Natural killer cell (primary cell): ENCODE measurements at regions of chr19 and their contacts with region 1.

Region 1: DNA sequence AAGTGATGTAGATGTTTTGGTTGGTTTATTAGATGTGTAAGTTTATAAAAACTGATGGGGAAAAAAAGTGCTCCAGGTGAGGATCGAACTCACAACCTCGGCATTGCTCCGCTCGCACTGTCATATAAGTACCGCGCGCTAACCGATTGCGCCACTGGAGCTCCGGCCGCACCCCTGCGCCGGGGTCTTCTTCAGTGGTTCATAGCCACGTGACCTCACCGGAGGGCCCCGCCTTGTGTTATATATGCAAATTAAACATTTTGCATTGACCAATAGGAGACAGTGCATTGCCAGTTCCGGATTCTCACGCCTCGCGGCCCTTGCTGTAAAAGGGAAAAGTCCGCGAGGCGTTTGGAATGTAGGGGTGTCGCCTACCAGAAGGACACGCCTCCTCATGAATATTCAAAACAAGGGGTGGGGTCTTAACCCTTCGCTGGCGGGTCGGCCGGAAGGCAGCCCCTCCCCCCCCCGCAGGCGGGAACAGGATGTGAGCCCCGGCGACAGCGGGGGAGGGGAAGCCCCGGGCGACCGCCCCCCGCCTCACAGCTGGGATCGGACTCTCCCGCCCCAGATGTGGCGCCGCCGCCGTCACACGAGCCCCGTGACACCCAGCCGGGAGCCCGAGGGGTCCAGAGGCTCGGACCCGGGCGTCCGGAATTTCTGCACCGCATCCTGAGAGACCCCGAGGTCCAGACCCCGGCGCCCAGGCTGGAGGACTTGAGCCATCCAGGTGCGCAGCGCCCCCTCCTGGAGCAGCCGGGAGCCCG is at the start of gene PLEKHG2:
- DNase-seq: peak; percentile 98
- ATAC-seq: peak; percentile 54 to 80 (median 57)
- H3K4me3 ChIP-seq: peak within 1 kb of the TSS; percentile 70
- H3K4me3 Mint-ChIP-seq: peak within 1 kb of the TSS; percentile 97
- H3K27ac ChIP-seq: peak within 1 kb of the TSS; percentile 96
- H3K27ac Mint-ChIP-seq: peak within 1 kb of the TSS; percentile 96 to 97
- H3K4me1 ChIP-seq: peaks cover 47% of the 10 kb centered on the region
- H3K4me1 Mint-ChIP-seq: peaks cover 55 to 66% of the 10 kb centered on the region in 2 donors
- H3K27me3 ChIP-seq: no peaks in the 10 kb centered on the region
- H3K27me3 Mint-ChIP-seq: no peaks in the 10 kb centered on the region
- CTCF ChIP-seq: peak; percentile 86
- total RNA-seq, gene PLEKHG2: 70.2 to 129 (median 80.7) TPM

Region 2: DNA sequence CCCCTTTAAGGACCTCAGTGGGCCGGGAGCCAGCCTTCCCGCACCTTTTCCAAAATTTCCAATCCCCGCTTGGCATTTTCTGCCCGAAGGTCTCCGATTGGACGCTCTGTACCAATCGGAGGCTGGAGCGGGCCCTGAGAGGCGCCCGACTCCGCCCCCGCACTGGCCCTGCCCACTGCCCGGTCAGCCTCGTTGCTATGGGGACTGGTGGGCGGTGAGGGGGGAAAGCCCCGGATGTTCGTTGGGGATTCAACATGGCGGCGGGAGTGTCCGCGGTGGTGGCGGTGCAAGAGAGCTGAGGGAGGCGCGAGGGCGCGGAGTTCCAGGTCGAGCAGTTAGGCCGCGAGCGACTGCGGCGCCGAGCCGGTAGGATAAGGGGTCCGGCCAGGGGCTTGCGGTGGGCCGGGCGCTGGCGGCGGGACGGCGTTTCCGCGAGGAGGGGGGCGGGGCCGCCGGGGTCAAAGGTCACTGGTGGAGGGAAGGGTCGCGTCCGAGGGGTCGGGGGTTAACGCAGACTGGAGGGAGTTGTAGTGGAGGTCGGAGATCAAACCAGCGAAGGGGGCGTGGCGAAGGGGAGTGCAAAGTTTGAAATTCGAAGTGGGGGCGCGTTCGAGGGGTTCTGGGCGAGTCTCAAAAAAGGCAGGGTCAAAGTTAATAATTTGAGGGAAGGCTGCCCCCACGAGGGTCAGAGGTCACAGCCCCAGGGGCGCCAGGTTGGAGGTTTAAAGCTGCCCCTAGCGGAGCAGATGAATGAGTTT is 286.6 kb before region 1 on chr19 and contains the start of gene PAK4:
- intact Hi-C with region 1: loop called (anchors 2 kb)
- DNase-seq: peak; percentile 97
- ATAC-seq: peak; percentile 96 to 98 (median 97)
- H3K4me3 ChIP-seq: peak within 1 kb of the TSS; percentile 37
- H3K4me3 Mint-ChIP-seq: peak within 1 kb of the TSS; percentile 98
- H3K27ac ChIP-seq: peak within 1 kb of the TSS; percentile 73
- H3K27ac Mint-ChIP-seq: peak within 1 kb of the TSS; percentile 95 to 100
- H3K4me1 ChIP-seq: peaks cover 25% of the 10 kb centered on the region
- H3K4me1 Mint-ChIP-seq: peaks cover 20 to 33% of the 10 kb centered on the region in 2 donors
- H3K27me3 ChIP-seq: no peaks in the 10 kb centered on the region
- H3K27me3 Mint-ChIP-seq: peaks cover 0 to 4% of the 10 kb centered on the region in 2 donors
- CTCF ChIP-seq: no peak
- total RNA-seq, gene PAK4: 6.7 to 13.4 (median 11.8) TPM

Region 3: DNA sequence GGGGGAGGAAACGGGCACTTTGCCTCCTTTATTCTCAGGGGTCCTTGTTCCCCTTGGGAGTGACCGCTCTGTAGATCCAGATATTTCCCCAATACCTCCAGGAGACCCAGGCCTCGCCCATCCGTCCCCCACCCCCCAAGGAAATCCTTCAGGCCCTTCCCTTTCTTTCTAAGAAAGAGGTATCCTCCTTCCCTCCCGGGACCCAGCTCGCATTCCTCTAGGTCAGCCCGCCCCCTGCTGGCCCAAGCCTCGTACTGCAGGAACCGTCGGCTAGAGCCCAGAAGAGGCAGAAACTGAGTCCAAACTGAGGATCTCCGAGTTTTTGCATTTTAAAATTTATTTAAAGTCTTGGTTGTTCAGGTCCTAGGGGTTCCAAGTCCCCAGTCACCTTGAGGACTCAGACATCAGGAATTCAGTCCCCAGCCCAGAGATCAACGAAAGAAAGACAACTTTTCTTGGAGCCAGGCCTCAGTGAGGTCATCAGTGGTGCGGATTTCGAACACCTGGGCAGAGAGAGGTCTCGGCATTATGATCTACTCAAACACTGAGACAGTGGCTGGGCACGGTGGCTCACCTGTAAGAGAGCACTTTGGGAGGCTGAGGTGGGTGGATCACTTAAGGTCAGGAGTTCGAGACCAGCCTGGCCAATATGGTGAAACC is 84.1 kb before region 1 on chr19:
- intact Hi-C with region 1: no loop called
- DNase-seq: peak; percentile 83 to 88
- ATAC-seq: peak; percentile 88 to 95 (median 89)
- H3K4me3 ChIP-seq: no peak overlapping the region
- H3K4me3 Mint-ChIP-seq: peak overlapping the region; percentile 28
- H3K27ac ChIP-seq: no peak overlapping the region
- H3K27ac Mint-ChIP-seq: peak overlapping the region; percentile 64 to 81
- H3K4me1 ChIP-seq: peaks cover 44% of the 10 kb centered on the region
- H3K4me1 Mint-ChIP-seq: peaks cover 23 to 29% of the 10 kb centered on the region in 2 donors
- H3K27me3 ChIP-seq: no peaks in the 10 kb centered on the region
- H3K27me3 Mint-ChIP-seq: no peaks in the 10 kb centered on the region
- CTCF ChIP-seq: peak; percentile 96

Region 4: DNA sequence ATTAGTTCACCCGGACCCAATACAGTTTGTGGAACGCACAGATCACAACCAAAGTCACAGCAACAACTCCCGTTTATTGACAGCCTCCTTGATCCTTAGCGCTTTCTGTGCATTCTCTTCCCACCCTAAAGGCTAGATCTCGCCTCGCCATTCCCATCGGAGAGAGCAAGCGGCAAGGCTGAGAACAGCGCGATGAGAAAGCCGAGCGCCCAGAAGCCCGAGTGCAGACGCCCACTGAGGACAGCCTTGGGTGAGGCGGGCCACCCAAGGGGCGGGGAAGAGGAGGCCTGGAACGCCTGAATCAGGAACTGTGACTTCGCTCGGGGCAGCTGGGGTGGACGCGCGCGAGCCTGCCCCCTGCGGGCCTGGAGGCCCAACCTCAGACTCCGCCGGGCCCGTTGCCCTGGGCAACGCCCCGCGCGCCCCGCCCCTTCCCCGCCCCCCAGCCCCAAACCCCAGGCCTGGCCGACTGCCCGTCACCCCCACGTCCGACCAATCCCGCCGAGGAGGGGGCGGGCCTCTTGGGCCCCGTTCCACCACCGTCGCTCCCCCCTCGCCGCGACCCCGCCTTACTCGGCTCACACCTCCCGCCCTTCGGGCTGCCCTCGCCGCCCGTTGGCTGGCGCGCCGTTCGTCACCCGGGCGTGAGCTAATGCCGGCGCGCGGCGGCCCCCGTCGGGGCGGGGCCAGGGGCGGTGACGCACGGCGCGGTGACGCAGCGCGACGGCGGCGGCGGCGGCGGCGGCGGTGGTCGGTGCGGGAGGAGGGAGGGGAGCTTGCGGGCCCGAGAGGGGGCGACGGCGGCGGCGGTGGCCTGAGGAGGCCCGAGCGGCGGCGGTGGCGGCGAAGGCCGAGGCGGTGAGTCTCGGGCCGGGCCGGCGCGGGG is 70.3 kb before region 1 on chr19 and contains the start of gene SAMD4B:
- intact Hi-C with region 1: loop called (anchors 2 kb)
- DNase-seq: peak; percentile 99
- ATAC-seq: peak; percentile 88 to 96 (median 88)
- H3K4me3 ChIP-seq: peak within 1 kb of the TSS; percentile 97
- H3K4me3 Mint-ChIP-seq: peak within 1 kb of the TSS; percentile 99
- H3K27ac ChIP-seq: peak within 1 kb of the TSS; percentile 86
- H3K27ac Mint-ChIP-seq: peak within 1 kb of the TSS; percentile 97
- H3K4me1 ChIP-seq: peaks cover 23% of the 10 kb centered on the region
- H3K4me1 Mint-ChIP-seq: peaks cover 48 to 66% of the 10 kb centered on the region in 2 donors
- H3K27me3 ChIP-seq: no peaks in the 10 kb centered on the region
- H3K27me3 Mint-ChIP-seq: no peaks in the 10 kb centered on the region
- CTCF ChIP-seq: peak; percentile 80
- total RNA-seq, gene SAMD4B: 67.8 to 80.8 (median 78.9) TPM

Region 5: GRCh38 chr19:39397360-39398296 is 14.7 kb before region 1 on chr19:
- intact Hi-C with region 1: loop called (anchors 1 kb)
- DNase-seq: peak; percentile 95 to 96
- ATAC-seq: peak; percentile 41 to 66 (median 42)
- H3K4me3 ChIP-seq: no peak overlapping the region
- H3K4me3 Mint-ChIP-seq: peak overlapping the region; percentile 61
- H3K27ac ChIP-seq: peak overlapping the region; percentile 91
- H3K27ac Mint-ChIP-seq: peak overlapping the region; percentile 96 to 97
- H3K4me1 ChIP-seq: peaks cover 57% of the 10 kb centered on the region
- H3K4me1 Mint-ChIP-seq: peaks cover 44 to 50% of the 10 kb centered on the region in 2 donors
- H3K27me3 ChIP-seq: no peaks in the 10 kb centered on the region
- H3K27me3 Mint-ChIP-seq: no peaks in the 10 kb centered on the region
- CTCF ChIP-seq: peak; percentile 96

Region 6: GRCh38 chr19:39435499-39436349 is 23.4 kb after region 1 on chr19 and contains the start of gene RPS16:
- intact Hi-C with region 1: loop called (anchors 1 kb)
- DNase-seq: peak; percentile 99
- ATAC-seq: peak; percentile 94 to 99 (median 94)
- H3K4me3 ChIP-seq: peak within 1 kb of the TSS; percentile 76
- H3K4me3 Mint-ChIP-seq: peak within 1 kb of the TSS; percentile 99
- H3K27ac ChIP-seq: peak within 1 kb of the TSS; percentile 95
- H3K27ac Mint-ChIP-seq: peak within 1 kb of the TSS; percentile 96 to 98
- H3K4me1 ChIP-seq: peaks cover 32% of the 10 kb centered on the region
- H3K4me1 Mint-ChIP-seq: peaks cover 27 to 36% of the 10 kb centered on the region in 2 donors
- H3K27me3 ChIP-seq: no peaks in the 10 kb centered on the region
- H3K27me3 Mint-ChIP-seq: peaks cover 0 to 3% of the 10 kb centered on the region in 2 donors
- CTCF ChIP-seq: no peak
- total RNA-seq, gene RPS16: 1,227 to 1,543 (median 1,399) TPM

Region 7: GRCh38 chr19:39445265-39446111 is 33.2 kb after region 1 on chr19 and contains the start of gene SUPT5H:
- intact Hi-C with region 1: loop called (anchors 2 kb)
- DNase-seq: peak; percentile 96 to 100
- ATAC-seq: peak; percentile 93 to 98 (median 95)
- H3K4me3 ChIP-seq: peak within 1 kb of the TSS; percentile 99
- H3K4me3 Mint-ChIP-seq: peak within 1 kb of the TSS; percentile 98
- H3K27ac ChIP-seq: peak within 1 kb of the TSS; percentile 99
- H3K27ac Mint-ChIP-seq: peak within 1 kb of the TSS; percentile 97 to 100
- H3K4me1 ChIP-seq: peaks cover 56% of the 10 kb centered on the region
- H3K4me1 Mint-ChIP-seq: peaks cover 41 to 54% of the 10 kb centered on the region in 2 donors
- H3K27me3 ChIP-seq: no peaks in the 10 kb centered on the region
- H3K27me3 Mint-ChIP-seq: no peaks in the 10 kb centered on the region
- CTCF ChIP-seq: no peak
- total RNA-seq, gene SUPT5H: 228 to 256 (median 230) TPM

Region 8: DNA sequence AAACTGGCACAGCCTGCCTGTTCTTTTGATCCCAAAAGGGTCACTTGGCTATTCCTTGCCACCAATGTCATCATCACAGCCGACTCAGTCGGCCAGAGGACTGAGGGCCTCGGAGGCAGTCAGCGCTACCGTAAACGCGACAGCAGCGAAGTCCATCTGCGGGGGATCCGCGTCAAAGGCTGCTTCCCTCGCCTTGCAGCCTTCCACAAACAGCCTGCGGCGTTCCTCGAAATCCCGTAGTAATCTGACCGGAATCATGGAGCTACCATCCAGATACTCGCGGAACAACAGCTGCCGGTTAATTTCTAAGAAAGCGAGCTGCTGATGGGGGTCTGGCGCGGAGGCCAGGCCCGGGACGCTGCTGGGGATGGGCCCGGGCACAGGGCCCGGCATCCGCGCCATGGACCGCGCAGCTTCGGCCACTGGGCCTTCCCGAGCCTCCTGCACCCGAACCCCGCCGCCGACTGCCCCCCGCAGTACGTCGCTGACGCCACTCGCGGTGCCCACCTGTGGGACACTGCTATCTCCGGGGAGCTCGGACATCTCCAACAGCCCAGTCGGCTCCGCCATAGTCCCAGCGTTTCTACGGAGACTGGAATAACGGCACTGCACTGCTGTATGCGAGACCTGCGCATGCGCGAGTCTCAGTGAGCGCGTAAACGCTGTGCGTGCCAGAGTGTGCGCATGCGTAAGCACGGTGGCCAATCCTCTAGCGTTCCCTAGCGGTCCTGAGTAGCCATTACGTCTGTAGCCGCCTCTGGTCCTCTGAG is 120.1 kb after region 1 on chr19 and contains the start of gene EID2B:
- intact Hi-C with region 1: loop called (anchors 5 kb)
- DNase-seq: peak; percentile 92 to 100
- ATAC-seq: peak; percentile 96 to 99 (median 97)
- H3K4me3 ChIP-seq: peak within 1 kb of the TSS; percentile 70
- H3K4me3 Mint-ChIP-seq: peak within 1 kb of the TSS; percentile 93
- H3K27ac ChIP-seq: peak within 1 kb of the TSS; percentile 73
- H3K27ac Mint-ChIP-seq: peak within 1 kb of the TSS; percentile 79 to 86
- H3K4me1 ChIP-seq: peaks cover 14% of the 10 kb centered on the region
- H3K4me1 Mint-ChIP-seq: peaks cover 8 to 13% of the 10 kb centered on the region in 2 donors
- H3K27me3 ChIP-seq: no peaks in the 10 kb centered on the region
- H3K27me3 Mint-ChIP-seq: no peaks in the 10 kb centered on the region
- CTCF ChIP-seq: peak; percentile 90
- total RNA-seq, gene EID2B: 4.6 to 6.7 (median 5.8) TPM